Common myeloid progenitor, CD34-positive (primary cell): ENCODE measurements at regions of chr20 and their contacts with region 1.

Region 1: GRCh38 chr20:19867940-19868371 is 109.9 kb downstream of the RIN2 start:
- DNase-seq: peak; percentile 25 to 58 (median 44)
- H3K4me3 ChIP-seq: no peak overlapping the region
- H3K27ac ChIP-seq: no peak overlapping the region
- H3K4me1 ChIP-seq: peaks cover 0 to 21% (median 12%) of the 10 kb centered on the region in 4 experiments
- H3K27me3 ChIP-seq: no peaks in the 10 kb centered on the region

Region 2: DNA sequence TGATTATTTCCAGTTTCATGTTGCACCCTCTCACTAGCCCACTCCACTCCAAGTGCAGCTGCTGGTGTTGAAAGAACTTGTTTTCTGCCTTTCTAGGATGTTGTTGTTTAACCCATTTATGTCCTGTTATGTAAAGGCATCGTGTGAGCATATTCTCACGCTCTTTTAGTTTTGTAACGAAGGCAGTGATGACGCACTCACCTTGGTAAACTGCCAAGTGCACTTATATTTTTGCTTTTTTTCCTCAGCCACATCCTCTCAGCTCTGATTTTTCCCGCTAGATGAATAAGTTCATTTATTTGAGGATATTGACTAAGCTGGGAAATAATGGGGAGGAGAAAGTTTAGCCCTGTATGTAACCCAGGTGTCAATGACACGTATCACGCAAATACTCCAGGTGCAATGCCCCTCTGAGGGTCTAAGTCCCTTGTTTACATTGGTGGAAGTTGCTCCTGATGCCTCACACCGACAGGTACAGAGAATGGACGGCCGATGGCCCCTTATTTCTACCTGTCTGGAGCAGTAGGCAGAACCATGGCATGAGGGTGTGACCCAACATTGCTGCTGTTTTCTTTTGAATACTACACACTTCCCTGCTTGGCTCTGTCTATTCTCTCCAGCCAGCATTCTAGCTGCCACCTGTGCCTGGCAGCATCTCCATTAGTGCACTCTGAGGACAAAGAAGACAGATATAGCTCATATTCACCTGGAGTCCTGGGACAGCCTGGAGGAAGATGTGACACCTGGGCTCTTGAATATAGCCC is 788.2 kb before region 1 on chr20:
- CTCF ChIA-PET with region 1: no interaction called
- POLR2A ChIA-PET with region 1: no interaction called
- DNase-seq: peak in 1 of 3 donors; percentile 25
- H3K4me3 ChIP-seq: no peak overlapping the region
- H3K27ac ChIP-seq: no peak overlapping the region
- H3K4me1 ChIP-seq: peaks cover 7 to 19% (median 16%) of the 10 kb centered on the region in 4 experiments
- H3K27me3 ChIP-seq: no peaks in the 10 kb centered on the region

Region 3: GRCh38 chr20:19885939-19886660 is 18.1 kb after region 1 on chr20:
- CTCF ChIA-PET with region 1: interaction called, 3 read pairs
- POLR2A ChIA-PET with region 1: interaction called, 10 read pairs
- DNase-seq: no peak
- H3K4me3 ChIP-seq: no peak overlapping the region
- H3K27ac ChIP-seq: no peak overlapping the region
- H3K4me1 ChIP-seq: peaks cover 0 to 13% (median 4%) of the 10 kb centered on the region in 4 experiments
- H3K27me3 ChIP-seq: no peaks in the 10 kb centered on the region